Astrocyte of the spinal cord (primary cell): ENCODE measurements at regions of chr10 and their contacts with region 1.

Region 1: GRCh38 chr10:93288654-93289634 is 193.2 kb downstream of the MYOF start:
- DNase-seq: peak; percentile 82
- H3K4me3 ChIP-seq: no peak overlapping the region
- CTCF ChIP-seq: peak; percentile 74

Region 2: DNA sequence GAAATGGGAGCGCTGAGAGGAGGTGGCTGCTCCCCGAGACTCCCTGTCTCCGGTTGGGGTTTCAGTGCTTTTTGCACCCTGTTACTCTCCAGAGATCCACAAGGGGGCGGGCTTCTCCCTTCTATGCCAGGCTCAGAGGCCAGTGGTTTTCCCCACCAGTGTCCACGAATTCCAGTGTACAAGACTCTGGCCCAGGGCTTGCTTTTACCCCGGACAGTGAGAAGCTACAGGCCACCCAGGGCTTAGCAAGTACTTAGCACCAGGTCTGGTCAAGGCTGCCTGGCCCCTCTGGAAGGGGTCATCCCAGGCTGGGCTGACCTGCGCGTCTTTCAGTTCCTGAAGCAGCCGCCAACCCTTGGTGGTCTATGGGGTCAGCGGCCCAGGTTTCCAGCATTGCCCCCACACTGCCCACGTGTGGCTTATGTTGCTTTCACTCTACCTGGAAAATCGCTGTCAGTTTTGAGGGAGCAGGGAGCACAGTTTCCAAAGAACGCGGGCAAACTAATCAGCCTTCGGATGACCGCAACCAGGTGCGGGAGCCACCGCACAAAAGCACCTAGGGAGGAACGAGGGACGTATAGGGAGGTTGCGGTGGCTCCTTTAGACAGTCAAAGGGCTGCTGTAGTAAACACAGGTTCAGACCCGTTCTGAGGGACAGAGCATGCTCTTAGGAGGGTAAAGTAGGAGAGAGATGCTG is 208.4 kb before region 1 on chr10:
- in situ Hi-C with region 1: loop called (anchors 25 kb)
- DNase-seq: peak; percentile 44
- H3K4me3 ChIP-seq: no peak overlapping the region
- CTCF ChIP-seq: peak; percentile 86

Region 3: GRCh38 chr10:93496322-93497041 is 207.5 kb after region 1 on chr10 and contains the start of gene CEP55:
- in situ Hi-C with region 1: no loop called
- DNase-seq: peak; percentile 96
- H3K4me3 ChIP-seq: peak within 1 kb of the TSS; percentile 77
- CTCF ChIP-seq: no peak